Endothelial cell of umbilical vein (primary cell): ENCODE measurements at regions of chr1 and their contacts with region 1.

Region 1: GRCh38 chr1:85406887-85407533 is 57.9 kb downstream of the DDAH1 start:
- DNase-seq: peak; percentile 96
- H3K4me3 ChIP-seq: peak overlapping the region in 1 of 3 experiments; percentile 46
- H3K27ac ChIP-seq: peak overlapping the region; percentile 91
- H3K4me1 ChIP-seq: peaks cover 32% of the 10 kb centered on the region
- H3K27me3 ChIP-seq: no peaks in the 10 kb centered on the region
- CTCF ChIP-seq: no peak
- POLR2A ChIP-seq: no peak

Region 2: GRCh38 chr1:85148524-85149250 is 258.3 kb before region 1 on chr1:
- CTCF ChIA-PET with region 1: no interaction called
- POLR2A ChIA-PET with region 1: no interaction called
- dilution Hi-C with region 1: no loop called
- intact Hi-C with region 1: no loop called
- DNase-seq: no peak
- H3K4me3 ChIP-seq: no peak overlapping the region
- H3K27ac ChIP-seq: no peak overlapping the region
- H3K4me1 ChIP-seq: no peaks in the 10 kb centered on the region
- H3K27me3 ChIP-seq: peaks cover 0 to 3% of the 10 kb centered on the region in 2 experiments
- CTCF ChIP-seq: no peak
- POLR2A ChIP-seq: no peak

Region 3: DNA sequence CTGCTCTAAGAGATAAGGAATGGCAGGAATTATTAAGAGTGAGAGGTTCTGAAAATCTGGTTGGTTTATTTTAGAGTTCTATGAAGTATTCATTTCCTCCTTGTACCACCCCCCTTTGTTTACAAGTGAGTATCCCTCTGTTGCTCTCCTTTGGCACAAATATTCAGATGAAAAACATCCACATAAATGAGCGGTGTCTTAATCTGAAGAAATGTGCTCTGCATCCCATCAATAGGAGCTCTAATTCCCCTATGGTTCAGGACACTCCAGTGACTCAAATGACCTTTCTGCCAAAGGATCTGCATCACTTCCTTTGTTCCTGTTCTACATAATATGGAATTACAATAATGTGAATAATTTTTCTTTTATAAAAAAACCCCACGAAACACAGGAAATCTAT is 41.3 kb after region 1 on chr1:
- CTCF ChIA-PET with region 1: interaction called, 3 read pairs
- POLR2A ChIA-PET with region 1: interaction called, 3 read pairs
- dilution Hi-C with region 1: no loop called
- intact Hi-C with region 1: loop called (anchors 2 kb)
- DNase-seq: peak; percentile 91
- H3K4me3 ChIP-seq: no peak overlapping the region
- H3K27ac ChIP-seq: peak overlapping the region; percentile 98
- H3K4me1 ChIP-seq: peaks cover 34% of the 10 kb centered on the region
- H3K27me3 ChIP-seq: no peaks in the 10 kb centered on the region
- CTCF ChIP-seq: no peak
- POLR2A ChIP-seq: no peak

Region 4: DNA sequence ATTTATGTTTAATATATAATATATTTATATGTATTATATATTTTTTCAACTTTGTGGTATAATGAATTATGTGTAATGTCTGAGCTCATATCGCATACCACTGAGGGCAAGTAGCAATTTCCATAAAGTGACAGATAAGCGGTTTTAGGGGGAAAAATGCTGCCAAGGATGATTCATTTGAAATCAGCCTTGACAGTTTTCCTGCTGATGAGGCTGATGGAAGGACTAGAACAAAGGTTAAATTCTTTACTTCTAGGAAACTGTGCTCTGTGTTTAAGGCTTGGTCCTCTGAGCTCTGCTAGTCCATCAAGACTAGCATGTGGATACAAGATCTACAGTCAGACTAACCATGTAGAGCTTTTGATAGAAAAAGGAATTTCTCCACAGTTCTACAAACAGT is 77.3 kb after region 1 on chr1:
- CTCF ChIA-PET with region 1: no interaction called
- POLR2A ChIA-PET with region 1: no interaction called
- dilution Hi-C with region 1: no loop called
- intact Hi-C with region 1: no loop called
- DNase-seq: no peak
- H3K4me3 ChIP-seq: no peak overlapping the region
- H3K27ac ChIP-seq: no peak overlapping the region
- H3K4me1 ChIP-seq: peaks cover 4% of the 10 kb centered on the region
- H3K27me3 ChIP-seq: no peaks in the 10 kb centered on the region
- CTCF ChIP-seq: no peak
- POLR2A ChIP-seq: no peak

Region 5: GRCh38 chr1:85654066-85654782 is 247.2 kb after region 1 on chr1:
- CTCF ChIA-PET with region 1: no interaction called
- POLR2A ChIA-PET with region 1: no interaction called
- dilution Hi-C with region 1: no loop called
- intact Hi-C with region 1: no loop called
- DNase-seq: peak; percentile 18
- H3K4me3 ChIP-seq: no peak overlapping the region
- H3K27ac ChIP-seq: no peak overlapping the region
- H3K4me1 ChIP-seq: peaks cover 12% of the 10 kb centered on the region
- H3K27me3 ChIP-seq: no peaks in the 10 kb centered on the region
- CTCF ChIP-seq: no peak
- POLR2A ChIP-seq: no peak